Activated CD4-positive, alpha-beta memory T cell treated with anti-CD3 and anti-CD28 coated beads, Interleukin-2, amount 10 ng/mL, durations not matched to agents 7 days and 5 days (primary cell): ENCODE measurements at regions of chr5 and their contacts with region 1.

Region 1: DNA sequence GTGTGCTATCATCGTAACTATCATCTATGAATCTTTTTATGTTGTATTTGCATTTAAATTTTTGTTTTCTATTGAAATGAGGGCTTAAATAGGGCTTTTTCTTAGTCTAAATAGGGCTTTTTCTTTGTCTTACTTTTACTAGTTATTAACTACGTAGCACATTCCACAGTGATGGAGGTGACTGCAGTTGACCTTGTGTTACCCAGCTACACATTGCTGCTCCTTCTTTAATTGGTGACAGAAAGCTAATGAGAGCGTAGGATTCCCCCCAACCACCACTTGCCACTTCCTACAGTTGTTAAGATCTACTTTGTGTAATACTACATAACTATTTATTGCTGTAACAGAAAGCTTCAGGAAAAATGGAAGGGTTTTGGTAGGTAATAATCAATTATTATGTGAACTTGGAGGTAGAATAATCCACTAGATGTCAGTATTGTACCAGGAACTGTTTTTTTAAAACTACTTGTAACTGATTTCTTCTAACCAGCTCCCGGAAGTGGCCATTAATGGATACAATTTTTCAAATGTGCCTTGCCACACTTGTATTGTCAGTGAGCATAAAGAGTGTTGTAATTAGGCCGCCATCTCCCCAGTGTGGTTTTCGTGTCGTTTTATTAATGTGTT is 18.0 kb downstream of the MTRR start:
- DNase-seq: no peak
- H3K4me3 Mint-ChIP-seq: no peak overlapping the region
- H3K27ac Mint-ChIP-seq: no peak overlapping the region
- H3K4me1 Mint-ChIP-seq: peaks cover 4% of the 10 kb centered on the region
- H3K27me3 Mint-ChIP-seq: no peaks in the 10 kb centered on the region

Region 2: DNA sequence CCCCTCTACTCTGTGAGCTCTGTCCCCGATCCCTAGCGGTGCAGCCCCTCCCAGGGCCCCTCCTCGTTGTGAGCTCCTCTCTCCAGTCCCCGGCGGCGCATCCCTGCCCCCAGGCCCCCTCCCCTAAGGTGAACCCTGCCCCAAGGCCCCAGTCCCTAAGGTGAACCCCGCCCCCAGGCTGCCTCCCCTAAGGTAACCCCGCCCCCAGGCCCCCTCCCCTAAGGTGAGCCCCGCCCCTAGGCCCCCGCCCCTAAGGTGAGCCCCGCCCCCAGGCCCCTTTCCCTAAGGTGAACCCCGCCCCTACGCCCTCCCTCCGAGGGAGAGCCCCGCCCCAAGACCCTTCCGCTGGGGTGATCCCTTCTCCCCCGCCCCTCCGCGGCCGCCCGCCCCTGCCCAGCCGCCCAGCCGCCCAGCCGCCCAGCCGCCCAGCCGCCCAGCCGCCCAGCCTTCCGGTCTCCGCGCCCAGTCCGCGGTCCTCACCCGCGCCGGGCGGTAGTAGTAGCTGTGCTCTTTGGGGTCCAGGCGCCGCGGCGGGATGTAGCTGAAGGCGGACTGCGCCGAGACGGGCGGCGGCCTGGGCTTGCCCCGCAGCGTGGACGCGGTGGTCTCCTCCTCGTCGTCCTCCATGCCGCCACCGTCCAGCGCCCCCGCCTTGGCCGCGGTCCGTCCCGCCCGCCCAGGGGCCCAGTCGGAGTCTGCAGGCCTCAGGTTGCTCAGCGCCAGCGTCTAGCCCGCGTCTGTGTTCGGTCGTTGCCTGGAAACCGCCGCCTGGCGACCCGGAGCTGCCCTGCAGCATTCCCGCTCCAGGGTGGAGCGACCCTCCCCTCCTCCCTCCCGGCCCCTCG is 36.3 kb before region 1 on chr5 and contains the start of gene CFAP90:
- CTCF ChIA-PET with region 1: no interaction called
- POLR2A ChIA-PET with region 1: no interaction called
- DNase-seq: no peak
- H3K4me3 Mint-ChIP-seq: peak within 1 kb of the TSS; percentile 56
- H3K27ac Mint-ChIP-seq: no peak within 1 kb of the TSS
- H3K4me1 Mint-ChIP-seq: peaks cover 21% of the 10 kb centered on the region
- H3K27me3 Mint-ChIP-seq: peaks cover 37% of the 10 kb centered on the region
- total RNA-seq, gene CFAP90: not detected

Region 3: GRCh38 chr5:7868773-7869473 is 18.0 kb before region 1 on chr5 and contains the starts of genes FASTKD3 and MTRR:
- CTCF ChIA-PET with region 1: interaction called, 83 read pairs
- POLR2A ChIA-PET with region 1: interaction called, 11 read pairs
- DNase-seq: peak; percentile 93
- H3K4me3 Mint-ChIP-seq: peak within 1 kb of the TSS; percentile 99
- H3K27ac Mint-ChIP-seq: peak within 1 kb of the TSS; percentile 83
- H3K4me1 Mint-ChIP-seq: peaks cover 76% of the 10 kb centered on the region
- H3K27me3 Mint-ChIP-seq: no peaks in the 10 kb centered on the region
- total RNA-seq, gene FASTKD3: 12.5 to 13.4 TPM
- total RNA-seq, gene MTRR: 58.4 to 65.3 TPM

Region 4: GRCh38 chr5:7897014-7897632 is 10.2 kb after region 1 on chr5:
- CTCF ChIA-PET with region 1: interaction called, 28 read pairs
- POLR2A ChIA-PET with region 1: no interaction called
- DNase-seq: peak; percentile 38
- H3K4me3 Mint-ChIP-seq: no peak overlapping the region
- H3K27ac Mint-ChIP-seq: no peak overlapping the region
- H3K4me1 Mint-ChIP-seq: peaks cover 16% of the 10 kb centered on the region
- H3K27me3 Mint-ChIP-seq: no peaks in the 10 kb centered on the region